ENCODE measurements at regions of chr7 and their contacts with region 1.

Region 1: GRCh38 chr7:150876817-150877526 is 24.7 kb downstream of the AOC1 start:
- DNase-seq: peak; percentile 72
- H3K4me3 Mint-ChIP-seq: peak overlapping the region; percentile 48
- H3K27ac Mint-ChIP-seq: peak overlapping the region; percentile 59
- H3K4me1 Mint-ChIP-seq: peaks cover 12% of the 10 kb centered on the region
- H3K27me3 Mint-ChIP-seq: no peaks in the 10 kb centered on the region
- CTCF ChIP-seq: peak; percentile 57

Region 2: GRCh38 chr7:150448789-150449147 is 428.2 kb before region 1 on chr7:
- CTCF ChIA-PET with region 1: no interaction called
- intact Hi-C with region 1: loop called (anchors 5 kb)
- DNase-seq: peak; percentile 85
- H3K4me3 Mint-ChIP-seq: no peak overlapping the region
- H3K27ac Mint-ChIP-seq: no peak overlapping the region
- H3K4me1 Mint-ChIP-seq: peaks cover 8% of the 10 kb centered on the region
- H3K27me3 Mint-ChIP-seq: peaks cover 58% of the 10 kb centered on the region
- CTCF ChIP-seq: peak; percentile 87

Measured in Calu3 (cell line).